GM12878 (cell line): ENCODE measurements at regions of chr12 and their contacts with region 1.

Region 1: DNA sequence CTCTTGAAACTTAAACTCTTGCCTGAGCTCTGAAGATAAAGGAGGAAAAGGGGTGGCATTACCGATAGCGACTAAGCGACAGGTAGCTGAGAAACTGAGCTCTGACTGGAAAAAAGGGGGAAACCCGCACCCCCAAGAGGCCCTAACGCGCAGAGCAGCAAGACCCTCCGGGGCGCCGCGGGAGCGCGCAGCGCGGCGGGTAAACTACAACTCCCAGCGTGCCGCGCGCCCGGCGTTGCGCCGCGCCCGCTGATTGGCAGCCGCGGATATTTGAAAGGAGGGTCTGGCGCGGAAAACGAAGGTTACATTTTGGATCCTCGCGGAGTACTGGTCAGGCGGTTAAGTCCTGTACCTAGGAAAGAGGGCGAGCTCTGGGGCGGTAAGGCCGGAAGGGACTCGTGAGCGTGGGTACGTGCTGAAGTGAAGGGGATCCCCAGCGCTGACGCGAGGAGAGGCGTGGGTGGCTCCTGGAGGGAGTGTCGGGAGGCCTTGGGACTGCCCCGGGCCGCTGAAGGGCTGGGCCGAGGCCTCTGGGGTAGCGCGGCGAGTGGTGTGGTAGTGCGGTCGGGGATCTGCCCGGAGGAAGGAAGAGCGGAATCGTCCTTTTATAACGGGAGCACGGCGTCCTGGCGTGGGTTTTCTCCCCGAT is at the start of gene ESPL1:
- DNase-seq: peak; percentile 58
- ATAC-seq: peak; percentile 93
- H3K4me3 ChIP-seq: peak within 1 kb of the TSS; percentile 77
- H3K27ac ChIP-seq: peak within 1 kb of the TSS; percentile 89
- H3K4me1 ChIP-seq: peaks cover 14% of the 10 kb centered on the region
- H3K27me3 ChIP-seq: no peaks in the 10 kb centered on the region
- CTCF ChIP-seq: peak; percentile 26 to 37 (median 33); a peak in 4 of 6 replicates
- EP300 ChIP-seq: no peak
- POLR2A ChIP-seq: peak; percentile 75
- RAD21 ChIP-seq: peak; percentile 47
- polyA plus RNA-seq, gene ESPL1: 2.1 to 2.2 TPM

Region 2: DNA sequence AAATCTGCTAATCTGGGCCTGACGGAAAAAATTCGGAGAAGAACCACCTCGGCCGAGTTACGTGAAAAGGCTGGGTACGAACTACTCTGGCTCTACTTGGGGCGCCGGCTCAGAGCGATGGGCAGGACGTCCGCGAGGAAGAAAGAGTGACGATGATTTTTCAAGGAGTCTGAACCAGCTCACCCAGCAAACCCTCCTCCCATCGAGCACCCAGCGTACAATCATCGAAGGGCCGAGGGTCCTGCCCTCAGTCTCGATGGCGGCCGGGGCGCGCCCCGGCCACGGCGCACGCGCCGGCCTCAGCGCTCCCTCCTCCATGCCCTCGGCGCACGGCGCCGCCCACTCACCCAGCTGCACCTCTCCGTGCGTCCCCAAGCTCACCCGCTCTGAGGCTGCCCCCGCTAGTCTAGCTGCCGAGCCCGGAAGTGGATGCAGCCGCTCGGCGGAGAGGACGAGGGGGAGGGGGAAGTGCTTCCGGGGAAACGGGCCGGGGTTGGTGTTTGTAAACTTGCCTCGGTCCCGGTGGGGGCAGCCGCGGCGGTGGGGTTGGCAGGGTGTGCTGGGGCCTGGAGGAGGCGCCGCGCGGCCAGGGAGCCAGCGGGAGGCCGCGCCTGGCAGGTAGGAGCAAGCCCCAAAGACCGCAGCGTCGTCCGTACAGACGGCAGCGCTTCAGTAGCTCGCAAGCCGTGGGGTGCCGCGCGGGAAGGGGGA is 87.7 kb before region 1 on chr12 and contains the starts of genes CSAD and ZNF740:
- CTCF ChIA-PET with region 1: interaction called, 10 read pairs
- POLR2A ChIA-PET with region 1: interaction called, 6 read pairs
- RAD21 ChIA-PET with region 1: interaction called, 11 read pairs
- SMC1A ChIA-PET with region 1: interaction called, 4 read pairs
- in situ Hi-C with region 1: no loop called
- intact Hi-C with region 1: no loop called
- DNase-seq: peak; percentile 91
- ATAC-seq: peak; percentile 96
- H3K4me3 ChIP-seq: peak within 1 kb of the TSS; percentile 78
- H3K27ac ChIP-seq: peak within 1 kb of the TSS; percentile 91
- H3K4me1 ChIP-seq: peaks cover 13% of the 10 kb centered on the region; the same call in 1 of the 2 replicates
- H3K27me3 ChIP-seq: no peaks in the 10 kb centered on the region
- CTCF ChIP-seq: peak in 2 of 3 experiments; percentile 2 to 12; a peak in 1 of 6 replicates
- EP300 ChIP-seq: no peak
- POLR2A ChIP-seq: peak; percentile 81
- RAD21 ChIP-seq: no peak
- polyA plus RNA-seq, gene CSAD: 1.2 to 2.0 TPM
- polyA plus RNA-seq, gene ZNF740: 1.4 to 1.8 TPM

Region 3: DNA sequence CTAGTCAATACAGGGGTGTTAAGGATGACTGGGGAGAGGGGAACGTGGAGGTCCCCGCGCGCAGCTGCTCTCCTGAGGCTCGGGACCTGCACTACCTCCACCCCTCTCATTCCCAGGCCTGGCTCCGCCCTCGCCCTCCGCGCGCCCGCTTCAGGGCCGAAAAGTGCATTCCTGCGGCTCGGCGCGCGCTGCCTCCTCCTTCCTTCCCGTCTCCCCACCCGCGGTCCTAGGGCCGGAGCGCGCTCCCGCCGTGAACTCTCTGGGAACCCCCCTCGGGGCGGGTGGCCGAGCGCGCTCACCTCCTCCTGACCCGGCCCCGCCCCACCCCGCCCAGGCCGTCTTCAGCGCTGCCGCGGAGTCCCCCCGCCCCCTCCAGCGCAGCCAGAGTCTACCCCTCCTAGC is 47.3 kb before region 1 on chr12:
- CTCF ChIA-PET with region 1: interaction called, 134 read pairs
- POLR2A ChIA-PET with region 1: interaction called, 26 read pairs
- RAD21 ChIA-PET with region 1: interaction called, 146 read pairs
- SMC1A ChIA-PET with region 1: interaction called, 155 read pairs
- in situ Hi-C with region 1: no loop called
- intact Hi-C with region 1: loop called (anchors 5 kb)
- DNase-seq: peak; percentile 69
- ATAC-seq: peak; percentile 86
- H3K4me3 ChIP-seq: peak overlapping the region; percentile 86
- H3K27ac ChIP-seq: peak overlapping the region; percentile 79
- H3K4me1 ChIP-seq: peaks cover 22% of the 10 kb centered on the region
- H3K27me3 ChIP-seq: no peaks in the 10 kb centered on the region
- CTCF ChIP-seq: no peak
- EP300 ChIP-seq: no peak
- POLR2A ChIP-seq: no peak
- RAD21 ChIP-seq: no peak

Region 4: GRCh38 chr12:53251477-53252348 is 16.4 kb before region 1 on chr12:
- CTCF ChIA-PET with region 1: interaction called, 72 read pairs
- POLR2A ChIA-PET with region 1: interaction called, 19 read pairs
- RAD21 ChIA-PET with region 1: interaction called, 28 read pairs
- SMC1A ChIA-PET with region 1: interaction called, 63 read pairs
- in situ Hi-C with region 1: no loop called
- intact Hi-C with region 1: no loop called
- DNase-seq: peak; percentile 24
- ATAC-seq: peak; percentile 92
- H3K4me3 ChIP-seq: peak overlapping the region; percentile 99
- H3K27ac ChIP-seq: peak overlapping the region; percentile 66
- H3K4me1 ChIP-seq: peaks cover 28% of the 10 kb centered on the region
- H3K27me3 ChIP-seq: no peaks in the 10 kb centered on the region
- CTCF ChIP-seq: peak; percentile 52 to 83 (median 64); a peak in 5 of 6 replicates
- EP300 ChIP-seq: no peak
- POLR2A ChIP-seq: peak; percentile 92
- RAD21 ChIP-seq: peak; percentile 83

Region 5: DNA sequence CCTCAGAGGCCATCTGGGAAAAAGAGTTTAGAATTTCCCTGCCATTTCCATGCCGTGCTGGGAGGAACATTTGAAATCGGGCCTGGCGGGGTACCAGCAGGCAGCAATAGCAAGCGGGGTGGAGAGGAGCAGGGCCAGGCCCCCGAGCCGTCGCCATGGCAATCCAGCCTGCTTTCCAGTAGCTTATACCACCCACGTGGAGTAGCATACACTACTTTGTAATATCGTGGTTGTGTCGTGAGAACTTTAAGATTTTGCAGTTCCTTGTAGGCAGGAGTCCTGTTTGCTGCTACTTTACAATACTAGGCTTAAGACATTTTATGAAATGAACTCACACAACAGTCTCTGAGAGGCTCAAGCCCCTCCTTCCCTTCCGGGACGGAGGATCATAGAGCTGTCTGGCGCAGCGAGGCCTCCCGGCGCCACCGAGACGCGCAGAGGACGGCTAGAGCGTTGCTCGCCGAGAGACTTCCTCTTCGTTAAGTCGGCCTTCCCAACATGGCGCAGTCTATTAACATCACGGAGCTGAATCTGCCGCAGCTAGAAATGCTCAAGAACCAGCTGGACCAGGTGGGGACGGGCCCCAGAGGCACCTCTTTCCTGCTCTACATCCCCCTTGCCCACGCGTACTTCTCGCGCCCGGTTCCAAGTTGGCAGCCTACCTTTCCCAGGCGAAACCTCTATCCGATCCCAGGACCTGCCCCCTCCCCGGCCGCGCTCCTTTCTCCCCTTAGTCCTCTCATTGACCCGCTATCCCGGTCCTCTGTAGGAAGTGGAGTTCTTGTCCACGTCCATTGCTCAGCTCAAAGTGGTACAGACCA is 27.2 kb after region 1 on chr12 and contains the start of gene PFDN5:
- CTCF ChIA-PET with region 1: interaction called, 87 read pairs
- POLR2A ChIA-PET with region 1: interaction called, 5 read pairs
- RAD21 ChIA-PET with region 1: interaction called, 11 read pairs
- SMC1A ChIA-PET with region 1: interaction called, 8 read pairs
- in situ Hi-C with region 1: no loop called
- intact Hi-C with region 1: no loop called
- DNase-seq: peak; percentile 73
- ATAC-seq: peak; percentile 95
- H3K4me3 ChIP-seq: peak within 1 kb of the TSS; percentile 82
- H3K27ac ChIP-seq: peak within 1 kb of the TSS; percentile 75
- H3K4me1 ChIP-seq: peaks cover 21% of the 10 kb centered on the region
- H3K27me3 ChIP-seq: no peaks in the 10 kb centered on the region
- CTCF ChIP-seq: peak in 1 of 3 experiments; percentile 8; a peak in 1 of 6 replicates
- EP300 ChIP-seq: 0 out of 4 replicates have a peak, but pooled peaks of 1 of the 2 experiments have one; percentile 27
- POLR2A ChIP-seq: peak; percentile 90
- RAD21 ChIP-seq: no peak
- polyA plus RNA-seq, gene PFDN5: 1,522 to 1,596 TPM

Region 6: DNA sequence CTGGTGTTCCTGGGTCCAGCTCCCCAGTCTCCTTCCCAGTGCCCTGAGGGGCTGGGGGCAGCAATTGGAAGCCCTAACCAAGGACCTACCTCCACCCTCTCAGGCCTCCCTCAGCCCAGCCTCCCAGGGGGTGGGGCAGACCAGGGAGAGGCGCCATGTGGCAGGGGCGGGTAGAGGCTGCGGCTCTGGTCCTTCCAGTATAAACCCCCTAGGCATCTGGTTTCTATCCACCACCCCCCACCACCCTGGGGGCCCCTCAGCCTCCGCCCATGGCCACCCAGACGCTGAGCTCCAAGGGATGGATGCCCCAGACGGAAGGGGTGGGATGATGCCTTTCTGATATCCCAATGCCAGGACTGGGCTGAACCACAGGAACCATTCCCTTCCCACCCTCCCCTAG is 70.8 kb after region 1 on chr12:
- CTCF ChIA-PET with region 1: no interaction called
- POLR2A ChIA-PET with region 1: no interaction called
- RAD21 ChIA-PET with region 1: no interaction called
- SMC1A ChIA-PET with region 1: no interaction called
- in situ Hi-C with region 1: no loop called
- intact Hi-C with region 1: no loop called
- DNase-seq: no peak
- ATAC-seq: no peak
- H3K4me3 ChIP-seq: no peak overlapping the region
- H3K27ac ChIP-seq: no peak overlapping the region
- H3K4me1 ChIP-seq: peaks cover 5% of the 10 kb centered on the region; the same call in 1 of the 2 replicates
- H3K27me3 ChIP-seq: peaks cover 2 to 10% of the 10 kb centered on the region in 2 experiments; a peak in 3 of 4 replicates
- CTCF ChIP-seq: no peak
- EP300 ChIP-seq: no peak
- POLR2A ChIP-seq: no peak
- RAD21 ChIP-seq: no peak